ENCODE measurements at regions of chr17 and their contacts with region 1.

Region 1: DNA sequence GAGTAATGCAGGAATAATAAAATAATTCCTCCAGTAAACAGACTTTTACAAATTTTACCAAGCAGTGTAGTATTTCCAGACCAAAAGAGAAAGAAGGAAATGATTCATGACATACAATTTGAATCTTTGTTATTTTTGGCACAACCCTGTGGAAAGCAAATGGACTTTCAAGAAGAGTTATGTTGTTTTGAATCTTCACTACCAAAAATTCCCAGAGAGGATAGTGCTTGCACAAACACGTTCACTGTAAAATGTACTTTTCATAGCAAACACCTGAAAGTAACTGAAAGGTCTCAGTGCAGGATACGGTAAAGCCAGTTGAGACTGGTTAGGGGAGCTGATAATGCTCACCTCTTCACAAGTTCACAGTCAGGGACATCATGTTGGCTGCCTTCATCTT is 107.1 kb downstream of the USP22 start:
- DNase-seq: no peak
- H3K4me3 Mint-ChIP-seq: no peak overlapping the region
- H3K27ac Mint-ChIP-seq: no peak overlapping the region
- H3K4me1 Mint-ChIP-seq: peaks cover 31% of the 10 kb centered on the region
- H3K27me3 Mint-ChIP-seq: no peaks in the 10 kb centered on the region
- CTCF ChIP-seq: no peak

Region 2: GRCh38 chr17:20797292-20797691 is 138.4 kb before region 1 on chr17:
- CTCF ChIA-PET with region 1: no interaction called
- intact Hi-C with region 1: no loop called
- DNase-seq: no peak
- H3K4me3 Mint-ChIP-seq: no peak overlapping the region
- H3K27ac Mint-ChIP-seq: no peak overlapping the region
- H3K4me1 Mint-ChIP-seq: no peaks in the 10 kb centered on the region
- H3K27me3 Mint-ChIP-seq: no peaks in the 10 kb centered on the region
- CTCF ChIP-seq: no peak

Region 3: DNA sequence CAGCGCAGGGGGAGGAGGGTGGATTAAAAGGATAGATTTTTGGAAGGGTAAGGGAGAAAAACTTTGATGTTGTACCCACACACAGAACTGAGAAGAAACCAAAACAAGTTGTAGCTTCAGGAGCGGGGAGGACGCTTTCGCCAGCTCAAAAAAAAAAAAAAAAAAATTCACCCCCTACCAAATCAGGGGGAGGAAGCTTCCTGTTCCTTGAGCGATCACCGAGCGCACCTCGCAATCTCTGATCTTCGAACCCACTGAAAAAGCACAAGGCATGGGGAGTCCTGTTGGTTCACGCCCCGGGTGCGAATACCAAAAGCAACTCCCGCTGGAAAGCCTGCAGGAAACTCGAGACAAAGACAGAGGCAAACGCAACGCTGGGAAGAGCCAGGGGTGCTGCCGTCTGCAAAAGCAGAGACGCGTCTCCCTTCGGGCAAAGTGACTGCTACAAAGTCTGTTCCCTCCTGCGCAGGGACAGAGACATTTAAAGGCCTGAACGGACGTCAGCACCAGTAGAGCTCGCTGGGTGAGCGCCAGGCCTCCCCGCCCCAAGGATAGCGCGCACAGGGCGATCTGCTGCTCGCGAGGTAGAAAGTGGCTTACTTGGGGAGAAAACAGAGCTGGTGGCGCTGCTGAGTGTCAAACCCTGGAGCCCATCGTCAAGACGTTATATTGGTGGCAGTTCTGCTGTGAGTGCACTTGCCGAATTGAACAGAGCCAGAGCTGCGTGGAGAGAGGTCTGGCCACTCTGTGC is 83.3 kb before region 1 on chr17:
- CTCF ChIA-PET with region 1: no interaction called
- intact Hi-C with region 1: loop called (anchors 10 kb)
- DNase-seq: peak; percentile 5
- H3K4me3 Mint-ChIP-seq: peak overlapping the region; percentile 19
- H3K27ac Mint-ChIP-seq: no peak overlapping the region
- H3K4me1 Mint-ChIP-seq: no peaks in the 10 kb centered on the region
- H3K27me3 Mint-ChIP-seq: peaks cover 17% of the 10 kb centered on the region
- CTCF ChIP-seq: no peak